Ascending aorta (tissue), 2 donors: ENCODE measurements at regions of chr11 and their contacts with region 1.

Region 1: DNA sequence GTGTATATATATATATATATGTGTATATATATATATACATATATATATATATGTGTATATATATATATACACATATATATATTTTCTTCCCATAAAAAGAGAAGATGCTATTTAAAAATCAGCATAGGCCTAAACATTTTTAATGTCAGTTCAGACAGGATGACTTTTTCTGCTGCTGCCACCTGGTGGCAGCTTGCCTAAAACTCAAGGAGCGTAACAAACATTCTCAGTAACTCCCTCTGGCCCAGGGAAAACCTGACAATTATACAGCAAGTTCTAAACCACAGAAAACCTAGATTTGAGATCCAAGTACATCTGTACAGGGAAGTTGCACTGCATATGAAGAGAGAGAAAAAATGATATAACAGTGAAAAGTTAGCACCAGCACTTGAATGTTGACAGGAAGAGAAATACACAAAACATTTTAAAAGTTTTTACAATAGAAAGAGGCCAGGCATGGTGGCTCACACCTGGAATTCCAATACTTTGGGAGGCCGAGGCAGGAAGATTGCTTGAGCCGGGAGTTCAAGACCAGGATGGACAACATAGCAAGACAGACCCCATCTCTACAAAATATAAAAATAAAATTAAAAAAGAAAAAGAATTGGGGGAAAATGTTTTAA is 16.6 kb downstream of the OR8A1 start:
- DNase-seq: no peak
- H3K4me3 ChIP-seq: no peak overlapping the region
- H3K27ac ChIP-seq: no peak overlapping the region
- H3K4me1 ChIP-seq: no peaks in the 10 kb centered on the region
- H3K27me3 ChIP-seq: no peaks in the 10 kb centered on the region
- CTCF ChIP-seq: peak; percentile 26 to 56 (median 45)

Region 2: GRCh38 chr11:124415356-124415923 is 170.9 kb before region 1 on chr11:
- intact Hi-C with region 1: loop called (anchors 2 kb)
- DNase-seq: no peak
- H3K4me3 ChIP-seq: no peak overlapping the region
- H3K27ac ChIP-seq: no peak overlapping the region
- H3K4me1 ChIP-seq: no peaks in the 10 kb centered on the region
- H3K27me3 ChIP-seq: no peaks in the 10 kb centered on the region
- CTCF ChIP-seq: peak in 2 of 3 experiments; percentile 54 to 60

Region 3: GRCh38 chr11:124612045-124612444 is 25.7 kb after region 1 on chr11:
- intact Hi-C with region 1: no loop called
- DNase-seq: no peak
- H3K4me3 ChIP-seq: no peak overlapping the region
- H3K27ac ChIP-seq: no peak overlapping the region
- H3K4me1 ChIP-seq: no peaks in the 10 kb centered on the region
- H3K27me3 ChIP-seq: no peaks in the 10 kb centered on the region
- CTCF ChIP-seq: no peak

Region 4: DNA sequence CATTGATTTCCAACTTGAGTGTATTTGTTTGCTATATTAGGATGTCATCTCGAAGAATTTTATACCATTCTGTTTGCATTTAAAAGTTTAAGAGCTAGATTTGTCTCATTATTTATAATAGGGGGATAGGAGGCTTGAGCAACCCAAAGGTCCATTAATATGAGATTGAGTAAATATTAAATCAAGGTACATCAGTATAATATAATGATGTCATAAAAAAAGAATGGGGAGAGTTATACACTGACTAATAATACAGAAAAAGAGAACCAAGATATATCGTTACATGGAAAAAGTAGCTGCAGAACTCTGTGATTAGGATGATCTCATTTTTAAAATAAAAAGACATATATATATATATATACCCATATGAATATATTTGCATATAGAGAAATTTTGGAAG is 106.8 kb after region 1 on chr11:
- intact Hi-C with region 1: no loop called
- DNase-seq: no peak
- H3K4me3 ChIP-seq: no peak overlapping the region
- H3K27ac ChIP-seq: no peak overlapping the region
- H3K4me1 ChIP-seq: no peaks in the 10 kb centered on the region
- H3K27me3 ChIP-seq: no peaks in the 10 kb centered on the region
- CTCF ChIP-seq: no peak